ENCODE measurements at regions of chr16 and their contacts with region 1.

Region 1: GRCh38 chr16:22098405-22099255 is 6.3 kb downstream of the VWA3A start:
- DNase-seq: peak; percentile 73
- CTCF ChIP-seq: peak; percentile 74

Region 2: GRCh38 chr16:21554795-21555585 is 543.6 kb before region 1 on chr16:
- in situ Hi-C with region 1: no loop called
- DNase-seq: peak; percentile 92
- CTCF ChIP-seq: peak; percentile 99

Region 3: GRCh38 chr16:22164482-22164881 is 65.9 kb after region 1 on chr16:
- in situ Hi-C with region 1: no loop called
- DNase-seq: no peak
- CTCF ChIP-seq: no peak

Region 4: DNA sequence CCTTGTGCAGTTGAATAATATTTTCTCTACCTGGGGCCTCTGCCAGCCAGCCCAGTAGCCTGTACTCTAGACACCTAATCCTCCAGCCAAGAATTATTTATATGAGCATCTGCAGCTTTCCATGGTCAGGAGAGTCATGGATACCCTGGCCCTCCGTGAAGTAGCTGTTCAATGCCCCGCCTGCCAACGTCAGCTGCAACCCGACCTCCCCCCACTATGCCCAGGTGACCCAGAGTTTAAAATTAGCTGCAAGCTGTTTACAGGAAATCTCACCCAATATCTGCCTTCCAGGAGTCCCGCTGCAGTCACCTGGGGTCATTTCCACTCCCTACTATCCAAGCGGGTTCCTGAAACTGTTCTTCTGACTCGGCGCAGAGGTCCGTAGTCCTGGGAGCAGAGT is 76.0 kb after region 1 on chr16:
- in situ Hi-C with region 1: loop called (anchors 10 kb)
- DNase-seq: no peak
- CTCF ChIP-seq: no peak

Region 5: GRCh38 chr16:22417019-22417418 is 318.4 kb after region 1 on chr16:
- in situ Hi-C with region 1: no loop called
- DNase-seq: no peak
- CTCF ChIP-seq: no peak

Measured in GM13977 (cell line).